Activated B cell treated with CpG ODN at 0.5 μM for 24 hours (primary cell): ENCODE measurements at regions of chr2 and their contacts with region 1.

Region 1: GRCh38 chr2:238288650-238289573 is 502 bp upstream of the PER2 start:
- DNase-seq: peak; percentile 95
- ATAC-seq: peak; percentile 87
- H3K4me3 Mint-ChIP-seq: peak overlapping the region; percentile 93
- H3K27ac Mint-ChIP-seq: peak overlapping the region; percentile 94
- H3K4me1 Mint-ChIP-seq: peaks cover 34% of the 10 kb centered on the region
- H3K27me3 Mint-ChIP-seq: no peaks in the 10 kb centered on the region
- CTCF ChIP-seq: no peak

Region 2: GRCh38 chr2:237465515-237466218 is 823.2 kb before region 1 on chr2:
- CTCF ChIA-PET with region 1: no interaction called
- POLR2A ChIA-PET with region 1: no interaction called
- intact Hi-C with region 1: no loop called
- DNase-seq: no peak
- ATAC-seq: no peak
- H3K4me3 Mint-ChIP-seq: no peak overlapping the region
- H3K27ac Mint-ChIP-seq: no peak overlapping the region
- H3K4me1 Mint-ChIP-seq: no peaks in the 10 kb centered on the region
- H3K27me3 Mint-ChIP-seq: peaks cover 8% of the 10 kb centered on the region
- CTCF ChIP-seq: no peak

Region 3: DNA sequence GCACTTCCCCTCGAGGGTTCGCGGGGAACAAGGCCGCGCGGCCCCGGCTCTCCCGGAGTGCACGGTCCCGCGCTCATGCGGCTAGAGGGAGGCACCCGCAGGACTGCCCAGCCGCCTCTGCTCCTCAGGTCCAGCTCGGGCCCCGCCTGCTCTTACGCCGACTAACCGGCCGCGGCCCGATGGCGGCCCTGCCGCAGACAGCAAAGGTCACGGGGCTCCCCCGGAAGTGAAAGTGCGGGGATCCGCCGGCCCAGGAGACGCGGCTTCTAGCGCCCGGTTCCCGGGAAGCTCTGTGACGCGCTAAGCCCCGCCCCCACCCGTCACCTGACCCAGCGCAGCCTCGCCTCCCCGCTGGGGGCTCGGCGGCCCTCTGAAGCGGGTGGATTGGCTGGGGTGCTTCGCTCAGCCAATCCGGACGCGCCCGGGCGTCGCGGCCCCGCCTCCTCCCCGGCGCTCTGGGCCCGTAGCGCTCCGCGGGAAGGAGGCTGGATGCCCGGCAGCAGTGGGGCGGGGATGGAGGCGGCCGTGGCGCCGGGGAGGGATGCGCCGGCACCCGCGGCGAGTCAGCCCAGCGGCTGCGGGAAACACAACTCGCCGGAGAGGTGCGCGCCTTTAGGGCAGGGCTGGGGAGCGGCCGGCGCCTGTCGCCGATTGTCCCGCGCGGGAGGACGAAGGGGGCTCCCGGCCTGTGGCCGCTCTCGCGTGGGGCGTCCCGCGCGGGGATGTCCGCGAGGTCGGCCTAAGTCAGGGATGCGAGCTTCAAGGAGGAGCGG is 228.2 kb before region 1 on chr2 and contains the start of gene SCLY:
- CTCF ChIA-PET with region 1: no interaction called
- POLR2A ChIA-PET with region 1: no interaction called
- intact Hi-C with region 1: loop called (anchors 1 kb)
- DNase-seq: peak; percentile 89
- ATAC-seq: peak; percentile 98
- H3K4me3 Mint-ChIP-seq: peak within 1 kb of the TSS; percentile 85
- H3K27ac Mint-ChIP-seq: peak within 1 kb of the TSS; percentile 78
- H3K4me1 Mint-ChIP-seq: peaks cover 20% of the 10 kb centered on the region
- H3K27me3 Mint-ChIP-seq: peaks cover 10% of the 10 kb centered on the region
- CTCF ChIP-seq: no peak
- total RNA-seq, gene SCLY: 24.1 and 26.9 TPM in 2 replicates

Region 4: DNA sequence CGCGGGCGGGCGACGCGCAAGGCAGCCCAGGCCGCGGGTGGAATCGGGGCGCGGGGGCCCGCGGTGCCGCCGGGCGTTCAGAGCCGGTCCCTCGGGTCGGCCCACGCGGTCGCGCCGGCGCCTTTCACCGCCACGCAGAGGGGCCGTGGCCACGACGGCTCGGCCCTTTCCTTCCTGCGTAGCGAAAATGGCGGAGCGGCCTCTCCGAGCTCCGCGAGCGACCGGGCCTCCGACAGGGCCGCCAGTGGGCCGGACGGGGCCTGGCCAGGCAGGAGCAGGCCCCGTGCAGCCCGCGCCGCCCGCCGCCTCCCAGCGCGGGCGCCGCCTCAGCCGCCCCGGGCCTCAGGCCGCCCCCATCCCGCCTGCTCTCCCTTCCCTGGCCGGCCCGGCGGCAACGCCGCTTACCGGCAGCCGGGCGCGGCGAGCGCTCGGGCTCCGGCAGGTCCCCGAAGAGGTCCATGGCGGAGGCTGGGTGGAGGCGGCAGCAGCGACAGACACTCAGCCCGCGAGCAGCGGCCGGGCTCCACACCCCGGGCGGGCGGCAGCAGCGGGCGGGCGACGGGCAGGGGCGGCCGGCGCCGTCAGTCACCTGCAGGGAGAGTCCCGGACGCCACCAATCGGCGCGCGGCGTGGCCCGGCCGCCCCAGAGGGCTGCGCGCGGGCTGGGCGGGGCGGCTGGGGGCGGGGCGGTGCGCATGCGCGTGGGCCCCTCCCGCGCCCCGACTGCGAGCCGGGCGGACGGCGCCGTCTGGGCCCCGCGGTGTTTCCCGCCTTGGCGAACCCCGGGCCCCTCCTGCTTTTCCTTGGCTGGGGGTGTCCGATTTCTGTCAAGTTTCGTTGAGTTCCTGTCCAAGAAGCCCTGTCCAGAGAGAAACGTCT is 85.6 kb before region 1 on chr2 and contains the start of gene ILKAP:
- CTCF ChIA-PET with region 1: no interaction called
- POLR2A ChIA-PET with region 1: interaction called, 6 read pairs
- intact Hi-C with region 1: loop called (anchors 1 kb)
- DNase-seq: peak; percentile 90
- ATAC-seq: peak; percentile 97
- H3K4me3 Mint-ChIP-seq: peak within 1 kb of the TSS; percentile 85
- H3K27ac Mint-ChIP-seq: peak within 1 kb of the TSS; percentile 89
- H3K4me1 Mint-ChIP-seq: peaks cover 48% of the 10 kb centered on the region
- H3K27me3 Mint-ChIP-seq: no peaks in the 10 kb centered on the region
- CTCF ChIP-seq: no peak
- total RNA-seq, gene ILKAP: 64.4 and 77.3 TPM in 2 replicates

Region 5: GRCh38 chr2:238256594-238257104 is 32.3 kb before region 1 on chr2:
- CTCF ChIA-PET with region 1: no interaction called
- POLR2A ChIA-PET with region 1: interaction called, 3 read pairs
- intact Hi-C with region 1: loop called (anchors 1 kb)
- DNase-seq: peak; percentile 46
- ATAC-seq: peak; percentile 97
- H3K4me3 Mint-ChIP-seq: no peak overlapping the region
- H3K27ac Mint-ChIP-seq: no peak overlapping the region
- H3K4me1 Mint-ChIP-seq: no peaks in the 10 kb centered on the region
- H3K27me3 Mint-ChIP-seq: no peaks in the 10 kb centered on the region
- CTCF ChIP-seq: no peak

Region 6: DNA sequence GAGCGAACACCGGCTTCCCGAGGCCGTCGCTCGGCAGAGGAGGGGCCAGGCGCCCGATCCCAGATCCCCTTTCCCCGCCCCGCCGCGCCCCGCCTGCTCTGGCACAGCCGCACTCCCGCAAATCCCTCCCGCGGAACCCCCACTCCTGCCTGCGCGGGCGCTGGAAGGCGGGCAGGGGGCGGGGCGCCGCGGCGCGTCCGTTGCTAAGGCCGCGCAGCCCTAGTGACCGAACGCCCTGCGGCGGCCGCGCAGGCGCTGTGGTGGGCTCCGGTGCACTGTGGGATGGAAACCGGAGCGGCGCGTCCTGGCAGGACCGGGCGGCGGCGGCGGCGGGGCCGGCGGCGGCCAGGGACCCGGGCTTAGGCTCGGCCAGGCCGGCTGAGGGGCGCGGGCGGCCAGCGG is 31.3 kb after region 1 on chr2 and contains the start of gene TRAF3IP1:
- CTCF ChIA-PET with region 1: no interaction called
- POLR2A ChIA-PET with region 1: interaction called, 6 read pairs
- intact Hi-C with region 1: loop called (anchors 1 kb)
- DNase-seq: peak; percentile 88
- ATAC-seq: peak; percentile 98
- H3K4me3 Mint-ChIP-seq: peak within 1 kb of the TSS; percentile 82
- H3K27ac Mint-ChIP-seq: no peak within 1 kb of the TSS
- H3K4me1 Mint-ChIP-seq: peaks cover 13% of the 10 kb centered on the region
- H3K27me3 Mint-ChIP-seq: peaks cover 9% of the 10 kb centered on the region
- CTCF ChIP-seq: no peak
- total RNA-seq, gene TRAF3IP1: 9.5 and 9.9 TPM in 2 replicates